Sigmoid colon (tissue), 7 donors: ENCODE measurements at regions of chr17 and their contacts with region 1.

Region 1: GRCh38 chr17:21252796-21253645 is at the start of gene NATD1:
- DNase-seq: peak; percentile 95
- H3K4me3 ChIP-seq: peak within 1 kb of the TSS; percentile 61 to 85 (median 80)
- H3K27ac ChIP-seq: peak within 1 kb of the TSS; percentile 74 to 81 (median 76)
- H3K4me1 ChIP-seq: peaks cover 0 to 45% (median 35%) of the 10 kb centered on the region in 4 donors
- H3K27me3 ChIP-seq: no peaks in the 10 kb centered on the region
- CTCF ChIP-seq: no peak
- EP300 ChIP-seq: peak in 1 of 4 donors; percentile 16
- POLR2A ChIP-seq: no peak
- total RNA-seq, gene NATD1: 6.8 to 13.8 (median 9.9) TPM

Region 2: DNA sequence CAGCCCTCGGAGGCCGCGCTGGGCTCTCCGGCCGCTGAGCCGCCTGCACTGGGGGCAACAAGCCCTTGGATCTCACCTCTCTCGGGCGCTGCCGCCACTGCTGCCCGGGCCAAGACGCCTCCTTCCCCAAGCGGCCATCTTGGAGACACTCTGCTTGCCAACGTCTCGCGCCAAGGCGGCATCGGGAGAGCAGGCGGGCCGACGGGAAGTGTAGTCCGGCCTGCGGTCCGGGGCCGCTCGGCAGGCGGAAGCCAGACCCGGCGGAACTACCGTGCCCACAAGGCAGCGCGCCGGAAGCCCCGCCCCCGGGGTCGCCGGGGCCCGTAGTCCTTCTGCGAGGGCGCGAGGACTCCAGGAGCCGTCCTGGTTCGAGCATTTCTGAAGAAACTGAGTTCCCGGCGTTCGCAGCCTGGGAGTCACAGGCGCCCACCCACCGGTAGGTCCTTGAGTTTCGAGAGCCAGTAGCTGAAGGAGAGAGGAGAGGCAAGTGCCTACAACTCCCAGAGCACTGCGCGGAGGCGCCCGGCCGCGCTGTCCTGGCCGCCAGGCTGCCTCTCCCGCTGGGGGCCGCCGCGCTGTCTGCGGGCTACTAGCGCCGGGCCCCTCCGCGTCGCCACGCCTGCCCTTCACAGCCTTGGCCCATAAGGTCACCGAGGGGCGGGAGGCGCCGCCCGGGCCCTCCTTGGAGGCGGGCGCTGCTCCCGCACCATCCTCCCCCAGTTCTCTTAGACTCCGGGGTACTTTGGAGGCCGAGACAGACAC is 38.8 kb before region 1 on chr17 and contains the start of gene TMEM11:
- intact Hi-C with region 1: loop called (anchors 1 kb)
- DNase-seq: peak; percentile 98
- H3K4me3 ChIP-seq: peak within 1 kb of the TSS; percentile 85 to 95 (median 91)
- H3K27ac ChIP-seq: peak within 1 kb of the TSS; percentile 89 to 93 (median 92)
- H3K4me1 ChIP-seq: peaks cover 0 to 61% (median 54%) of the 10 kb centered on the region in 4 donors
- H3K27me3 ChIP-seq: no peaks in the 10 kb centered on the region
- CTCF ChIP-seq: no peak
- EP300 ChIP-seq: no peak
- POLR2A ChIP-seq: peak; percentile 51 to 78
- total RNA-seq, gene TMEM11: 14.5 to 32.8 (median 22.4) TPM

Region 3: GRCh38 chr17:21284319-21285163 is 31.5 kb after region 1 on chr17 and contains the start of gene MAP2K3:
- intact Hi-C with region 1: no loop called
- DNase-seq: peak; percentile 100
- H3K4me3 ChIP-seq: peak within 1 kb of the TSS; percentile 77 to 97 (median 86)
- H3K27ac ChIP-seq: peak within 1 kb of the TSS; percentile 91 to 99 (median 98)
- H3K4me1 ChIP-seq: peaks cover 0 to 71% (median 67%) of the 10 kb centered on the region in 4 donors
- H3K27me3 ChIP-seq: no peaks in the 10 kb centered on the region
- CTCF ChIP-seq: no peak
- EP300 ChIP-seq: no peak
- POLR2A ChIP-seq: peak; percentile 31 to 33
- total RNA-seq, gene MAP2K3: 9.5 to 23.3 (median 13.3) TPM